ENCODE measurements at regions of chr10 and their contacts with region 1.

Region 1: GRCh38 chr10:35339942-35340341 is 3.6 kb downstream of the CCNY start:
- DNase-seq: no peak
- H3K4me3 ChIP-seq: no peak overlapping the region
- H3K4me3 Mint-ChIP-seq: peak overlapping the region in 5 of 7 donors; percentile 22 to 81 (median 46)
- H3K27ac ChIP-seq: no peak overlapping the region
- H3K27ac Mint-ChIP-seq: peak overlapping the region in 7 of 8 donors; percentile 49 to 89 (median 65)
- H3K4me1 ChIP-seq: peaks cover 48% of the 10 kb centered on the region
- H3K4me1 Mint-ChIP-seq: peaks cover 60 to 76% (median 71%) of the 10 kb centered on the region in 3 donors
- H3K27me3 ChIP-seq: no peaks in the 10 kb centered on the region
- H3K27me3 Mint-ChIP-seq: no peaks in the 10 kb centered on the region

Region 2: DNA sequence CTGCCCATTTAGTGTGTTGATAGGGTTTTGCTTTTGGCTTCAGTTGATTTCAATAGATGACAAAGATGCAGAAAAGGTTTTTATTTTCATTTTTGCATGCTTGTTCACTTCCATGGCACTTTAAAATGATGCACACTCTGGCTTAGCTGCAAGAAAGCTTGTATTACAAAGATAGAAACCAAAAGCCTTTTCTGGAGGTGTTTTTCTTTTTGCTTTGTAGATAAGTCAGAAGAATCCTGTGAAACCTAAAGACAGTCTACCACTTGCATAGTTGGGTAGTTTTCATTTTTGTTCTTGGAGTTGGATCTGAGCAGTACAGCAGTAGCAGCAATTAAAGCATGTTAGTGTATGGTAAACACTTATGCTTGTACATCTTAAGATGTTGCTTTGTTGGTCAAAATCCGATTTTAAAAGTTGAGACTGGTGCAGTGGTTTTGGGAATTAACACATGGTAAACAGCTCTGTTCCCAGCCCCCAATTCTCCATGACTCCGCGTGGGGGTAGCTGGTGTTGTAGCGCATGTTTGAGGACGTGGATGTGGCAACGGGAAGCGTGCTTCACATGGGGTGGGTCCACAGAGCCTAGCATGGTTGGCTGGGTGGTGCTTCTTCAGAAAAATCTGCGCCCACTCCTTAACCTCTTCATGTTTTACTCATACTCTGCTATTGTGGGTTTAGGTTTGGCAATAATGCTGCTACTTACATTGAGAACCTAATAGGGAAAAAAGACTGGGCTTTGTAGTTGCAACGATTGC is 16.2 kb after region 1 on chr10:
- CTCF ChIA-PET with region 1: no interaction called
- POLR2A ChIA-PET with region 1: interaction called, 13 read pairs
- DNase-seq: no peak
- H3K4me3 ChIP-seq: no peak overlapping the region
- H3K4me3 Mint-ChIP-seq: peak overlapping the region in 6 of 7 donors; percentile 11 to 71 (median 44)
- H3K27ac ChIP-seq: no peak overlapping the region
- H3K27ac Mint-ChIP-seq: peak overlapping the region in 4 of 8 donors; percentile 9 to 29 (median 16)
- H3K4me1 ChIP-seq: peaks cover 60% of the 10 kb centered on the region
- H3K4me1 Mint-ChIP-seq: peaks cover 68 to 88% (median 87%) of the 10 kb centered on the region in 3 donors
- H3K27me3 ChIP-seq: no peaks in the 10 kb centered on the region
- H3K27me3 Mint-ChIP-seq: no peaks in the 10 kb centered on the region

Region 3: GRCh38 chr10:35642027-35642792 is 302.3 kb after region 1 on chr10 and contains the start of gene FZD8:
- CTCF ChIA-PET with region 1: no interaction called
- POLR2A ChIA-PET with region 1: no interaction called
- DNase-seq: peak; percentile 28 to 68 (median 59)
- H3K4me3 ChIP-seq: peak within 1 kb of the TSS; percentile 74
- H3K4me3 Mint-ChIP-seq: peak within 1 kb of the TSS; percentile 74 to 93 (median 86)
- H3K27ac ChIP-seq: no peak within 1 kb of the TSS
- H3K27ac Mint-ChIP-seq: peak within 1 kb of the TSS in 3 of 8 donors; percentile 22 to 54 (median 43)
- H3K4me1 ChIP-seq: peaks cover 13% of the 10 kb centered on the region
- H3K4me1 Mint-ChIP-seq: peaks cover 16 to 37% (median 21%) of the 10 kb centered on the region in 3 donors
- H3K27me3 ChIP-seq: peaks cover 11% of the 10 kb centered on the region
- H3K27me3 Mint-ChIP-seq: peaks cover 15 to 39% of the 10 kb centered on the region in 2 donors
- total RNA-seq, gene FZD8: 0.50 to 0.55 TPM